GM18951 (cell line): ENCODE measurements at regions of chr3 and their contacts with region 1.

Region 1: GRCh38 chr3:66971891-66972551 is 26.1 kb upstream of the KBTBD8 start:
- POLR2A ChIP-seq: no peak

Region 2: DNA sequence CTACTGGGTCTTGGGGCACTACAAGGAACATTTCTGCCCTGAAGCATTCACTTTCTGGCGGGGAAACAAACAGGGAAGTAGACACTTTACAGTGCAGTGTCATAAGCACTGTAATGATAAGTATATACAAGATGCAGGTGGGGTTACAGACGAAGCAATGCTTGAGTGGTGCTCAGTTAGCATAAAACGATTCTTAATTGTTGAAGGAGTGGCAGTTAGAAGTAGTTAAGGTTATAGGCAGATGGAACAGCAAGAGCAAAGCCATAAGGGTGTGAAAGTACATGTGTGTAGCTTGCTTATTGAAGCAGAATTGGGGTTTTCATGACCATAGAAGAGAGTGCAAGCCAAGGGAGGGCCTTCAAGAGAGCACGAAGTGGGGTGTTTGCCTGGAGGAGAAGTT is 705.0 kb before region 1 on chr3:
- in situ Hi-C with region 1: no loop called
- POLR2A ChIP-seq: no peak

Region 3: GRCh38 chr3:67790043-67790442 is 818.0 kb after region 1 on chr3:
- in situ Hi-C with region 1: loop called (anchors 25 kb)
- POLR2A ChIP-seq: no peak

Region 4: GRCh38 chr3:68876112-68876713 is 1904.2 kb after region 1 on chr3:
- in situ Hi-C with region 1: loop called (anchors 25 kb)
- POLR2A ChIP-seq: no peak